ENCODE measurements at regions of chr4 and their contacts with region 1.

Region 1: GRCh38 chr4:54941994-54942552 is 183.3 kb downstream of the KDR start:
- DNase-seq: peak; percentile 65
- H3K4me3 Mint-ChIP-seq: peak overlapping the region; percentile 42
- H3K27ac Mint-ChIP-seq: peak overlapping the region; percentile 69
- H3K4me1 Mint-ChIP-seq: peaks cover 55% of the 10 kb centered on the region
- H3K27me3 Mint-ChIP-seq: no peaks in the 10 kb centered on the region

Region 2: GRCh38 chr4:53119680-53120079 is 1822.4 kb before region 1 on chr4:
- CTCF ChIA-PET with region 1: no interaction called
- intact Hi-C with region 1: loop called (anchors 10 kb)
- DNase-seq: no peak
- H3K4me3 Mint-ChIP-seq: no peak overlapping the region
- H3K27ac Mint-ChIP-seq: no peak overlapping the region
- H3K4me1 Mint-ChIP-seq: peaks cover 39% of the 10 kb centered on the region
- H3K27me3 Mint-ChIP-seq: no peaks in the 10 kb centered on the region

Region 3: DNA sequence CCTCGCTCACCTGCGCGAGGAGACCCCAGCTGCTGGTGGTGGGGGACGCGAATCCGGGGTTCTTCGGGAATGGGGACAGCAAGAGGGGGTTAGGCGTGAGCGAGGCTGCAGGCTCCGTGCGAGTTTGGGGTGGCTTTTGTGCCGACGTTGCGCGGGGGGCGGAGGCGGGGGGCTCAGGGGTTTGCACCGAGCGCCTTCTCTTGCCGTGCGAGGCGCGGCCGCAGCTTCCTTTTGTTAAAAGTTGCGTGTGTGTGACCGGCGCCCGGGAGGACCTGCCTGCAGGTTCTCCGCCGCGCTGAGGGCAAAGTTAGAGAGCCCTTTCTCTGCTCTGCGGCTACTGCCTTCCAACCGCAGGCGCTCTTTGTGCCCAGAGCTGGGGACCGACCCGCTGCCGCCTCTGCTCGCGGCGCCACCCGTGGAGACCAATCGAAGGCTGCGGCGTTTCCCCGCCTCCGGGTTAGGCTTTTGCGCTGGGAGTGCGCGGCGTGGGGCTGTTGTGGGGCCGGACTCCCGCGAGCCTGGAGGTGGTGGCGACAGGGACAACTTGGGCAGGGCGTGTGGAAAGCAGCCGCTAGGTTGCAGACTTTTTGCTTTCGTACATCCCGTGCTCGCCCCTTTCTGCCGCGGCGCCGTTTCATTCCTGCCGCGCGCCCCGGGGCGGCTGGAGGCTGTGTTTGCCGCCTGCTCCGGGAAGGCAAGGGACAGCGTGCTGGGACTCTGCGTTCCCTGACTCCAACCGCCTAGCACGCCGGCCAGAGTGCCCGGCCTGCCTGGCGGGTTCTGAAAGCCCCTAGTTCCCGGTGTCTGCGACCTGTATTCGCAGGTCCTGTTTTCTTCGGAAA is 283.6 kb before region 1 on chr4:
- CTCF ChIA-PET with region 1: no interaction called
- intact Hi-C with region 1: loop called (anchors 10 kb)
- DNase-seq: peak; percentile 50
- H3K4me3 Mint-ChIP-seq: peak overlapping the region; percentile 72
- H3K27ac Mint-ChIP-seq: no peak overlapping the region
- H3K4me1 Mint-ChIP-seq: peaks cover 20% of the 10 kb centered on the region
- H3K27me3 Mint-ChIP-seq: peaks cover 56% of the 10 kb centered on the region

Region 4: DNA sequence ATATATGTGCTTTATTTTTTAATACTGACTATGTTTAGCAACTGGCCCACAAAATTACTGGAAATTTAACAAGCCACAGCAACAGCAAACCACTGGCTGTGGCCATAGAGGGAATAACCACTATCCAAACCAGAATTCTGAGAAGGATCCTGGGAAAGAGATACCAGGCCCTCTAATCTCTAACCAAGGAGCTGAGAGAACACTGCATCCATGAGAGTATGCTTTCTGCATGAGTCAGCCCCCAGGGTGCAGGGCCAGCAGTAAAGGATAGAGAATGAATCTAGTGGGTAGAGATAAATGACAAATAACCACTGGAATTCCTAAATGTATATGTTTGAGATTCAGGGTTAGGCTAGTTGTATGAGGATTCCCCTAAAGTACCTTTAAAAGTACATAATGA is 62.5 kb before region 1 on chr4:
- CTCF ChIA-PET with region 1: no interaction called
- intact Hi-C with region 1: loop called (anchors 5 kb)
- DNase-seq: no peak
- H3K4me3 Mint-ChIP-seq: no peak overlapping the region
- H3K27ac Mint-ChIP-seq: no peak overlapping the region
- H3K4me1 Mint-ChIP-seq: no peaks in the 10 kb centered on the region
- H3K27me3 Mint-ChIP-seq: no peaks in the 10 kb centered on the region

Region 5: GRCh38 chr4:55395529-55396307 is 453.6 kb after region 1 on chr4 and contains the start of gene TMEM165:
- CTCF ChIA-PET with region 1: no interaction called
- intact Hi-C with region 1: loop called (anchors 5 kb)
- DNase-seq: peak; percentile 92
- H3K4me3 Mint-ChIP-seq: peak within 1 kb of the TSS; percentile 96
- H3K27ac Mint-ChIP-seq: peak within 1 kb of the TSS; percentile 89
- H3K4me1 Mint-ChIP-seq: peaks cover 39% of the 10 kb centered on the region
- H3K27me3 Mint-ChIP-seq: no peaks in the 10 kb centered on the region
- total RNA-seq, gene TMEM165: 39.1 to 40.6 TPM

Region 6: DNA sequence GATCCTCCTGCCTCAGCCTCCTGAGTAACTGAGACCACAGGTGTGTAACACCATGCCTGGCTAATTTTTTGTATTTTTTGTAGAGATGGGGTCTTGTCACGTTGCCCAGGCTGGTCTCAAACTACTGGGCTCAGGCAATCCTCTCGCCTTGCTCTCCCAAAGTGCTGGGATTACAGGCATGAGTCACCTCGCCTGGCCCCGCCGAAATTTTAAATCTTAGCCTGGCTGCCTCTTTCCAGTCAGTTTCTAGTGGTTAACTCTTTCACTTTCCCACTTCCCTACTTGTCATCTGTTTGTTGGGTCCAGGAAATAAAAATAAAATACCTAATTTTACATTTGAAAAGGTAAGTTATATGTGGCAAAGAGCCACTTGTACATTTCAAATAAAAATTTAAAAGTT is 516.1 kb after region 1 on chr4:
- CTCF ChIA-PET with region 1: no interaction called
- intact Hi-C with region 1: no loop called
- DNase-seq: no peak
- H3K4me3 Mint-ChIP-seq: no peak overlapping the region
- H3K27ac Mint-ChIP-seq: no peak overlapping the region
- H3K4me1 Mint-ChIP-seq: no peaks in the 10 kb centered on the region
- H3K27me3 Mint-ChIP-seq: no peaks in the 10 kb centered on the region

Region 7: GRCh38 chr4:55853484-55854046 is 911.5 kb after region 1 on chr4 and contains the start of gene EXOC1:
- CTCF ChIA-PET with region 1: no interaction called
- intact Hi-C with region 1: loop called (anchors 10 kb)
- DNase-seq: peak; percentile 99
- H3K4me3 Mint-ChIP-seq: peak within 1 kb of the TSS; percentile 32
- H3K27ac Mint-ChIP-seq: peak within 1 kb of the TSS; percentile 86
- H3K4me1 Mint-ChIP-seq: peaks cover 28% of the 10 kb centered on the region
- H3K27me3 Mint-ChIP-seq: no peaks in the 10 kb centered on the region
- total RNA-seq, gene EXOC1: 18.7 to 21.9 TPM